Breast epithelium (tissue), 4 donors: ENCODE measurements at regions of chr18 and their contacts with region 1.

Region 1: DNA sequence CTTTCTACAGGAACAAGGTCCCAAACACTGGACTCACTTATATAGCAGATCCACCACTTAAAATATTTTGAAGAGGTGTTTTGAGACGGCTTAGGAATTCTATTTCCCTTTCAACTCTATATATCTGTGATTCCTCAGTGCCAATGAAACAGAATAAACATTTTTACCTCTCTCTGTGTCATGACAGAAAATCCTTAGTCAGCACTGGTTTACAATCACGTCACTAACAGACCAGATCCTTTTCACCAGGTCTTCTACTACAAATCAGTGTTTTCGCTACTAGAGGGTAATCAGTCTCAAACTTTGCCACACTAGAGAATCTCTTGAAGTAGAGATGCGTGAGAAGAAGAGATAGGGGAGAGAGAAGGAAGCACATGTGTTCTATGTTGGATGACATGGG is 325.6 kb downstream of the SS18 start:
- DNase-seq: no peak
- H3K4me3 ChIP-seq: no peak overlapping the region
- H3K27ac ChIP-seq: no peak overlapping the region
- H3K4me1 ChIP-seq: no peaks in the 10 kb centered on the region
- H3K27me3 ChIP-seq: no peaks in the 10 kb centered on the region
- CTCF ChIP-seq: no peak
- POLR2A ChIP-seq: no peak

Region 2: GRCh38 chr18:25805323-25805722 is 40.5 kb after region 1 on chr18:
- intact Hi-C with region 1: loop called (anchors 1 kb)
- DNase-seq: no peak
- H3K4me3 ChIP-seq: no peak overlapping the region
- H3K27ac ChIP-seq: no peak overlapping the region
- H3K4me1 ChIP-seq: no peaks in the 10 kb centered on the region
- H3K27me3 ChIP-seq: no peaks in the 10 kb centered on the region
- CTCF ChIP-seq: no peak
- POLR2A ChIP-seq: no peak